Colonic mucosa (tissue), 4 donors: ENCODE measurements at regions of chr13 and their contacts with region 1.

Region 1: DNA sequence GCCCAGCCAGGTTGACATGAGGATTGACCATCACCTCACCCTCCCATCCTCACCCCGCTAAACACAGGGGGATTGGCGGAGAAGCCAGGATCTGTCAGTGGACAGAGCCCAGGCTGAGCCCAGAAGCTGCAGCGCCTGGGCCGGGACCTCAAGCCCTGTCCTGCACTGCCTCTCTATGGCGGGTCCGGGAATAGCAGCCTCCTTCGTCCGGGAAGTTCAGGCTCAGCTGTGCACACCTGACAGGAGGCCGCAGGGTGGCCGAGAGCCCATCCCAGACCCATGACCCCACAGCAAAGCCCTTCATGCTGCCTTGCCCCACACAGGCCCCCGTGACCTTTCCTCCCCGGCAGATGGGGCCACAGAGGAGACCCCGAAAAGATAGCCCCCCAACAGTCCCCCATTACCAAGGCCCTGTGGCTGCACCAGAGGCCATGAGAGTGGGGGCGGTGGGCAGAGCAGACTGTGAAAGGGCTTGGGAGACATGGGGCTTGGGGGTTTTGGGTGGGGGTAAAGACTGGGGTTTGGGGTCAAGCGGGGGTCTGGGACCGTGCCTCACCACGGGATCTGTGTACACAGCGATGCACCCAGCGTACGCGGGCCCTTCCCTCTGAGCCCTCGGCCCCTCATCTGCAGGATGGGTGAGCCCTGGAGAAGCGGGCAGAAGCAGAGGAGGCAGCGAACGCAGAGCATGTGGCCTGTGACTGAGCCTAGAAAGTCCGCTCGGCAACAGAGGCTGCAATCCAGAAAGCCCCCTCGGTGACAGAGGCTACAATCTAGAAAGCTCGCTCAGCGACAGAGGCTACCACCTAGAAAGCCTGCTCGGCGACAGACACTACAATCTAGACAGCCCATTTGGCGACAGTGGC is 68.1 kb downstream of the SPACA7 start:
- DNase-seq: peak; percentile 68
- H3K4me3 ChIP-seq: no peak overlapping the region
- H3K27ac ChIP-seq: no peak overlapping the region
- H3K4me1 ChIP-seq: no peaks in the 10 kb centered on the region
- H3K27me3 ChIP-seq: peaks cover 7% of the 10 kb centered on the region
- CTCF ChIP-seq: peak; percentile 83

Region 2: GRCh38 chr13:111474136-111475002 is 969.9 kb before region 1 on chr13:
- intact Hi-C with region 1: loop called (anchors 5 kb)
- DNase-seq: no peak
- H3K4me3 ChIP-seq: no peak overlapping the region
- H3K27ac ChIP-seq: no peak overlapping the region
- H3K4me1 ChIP-seq: no peaks in the 10 kb centered on the region
- H3K27me3 ChIP-seq: no peaks in the 10 kb centered on the region
- CTCF ChIP-seq: peak; percentile 20

Region 3: DNA sequence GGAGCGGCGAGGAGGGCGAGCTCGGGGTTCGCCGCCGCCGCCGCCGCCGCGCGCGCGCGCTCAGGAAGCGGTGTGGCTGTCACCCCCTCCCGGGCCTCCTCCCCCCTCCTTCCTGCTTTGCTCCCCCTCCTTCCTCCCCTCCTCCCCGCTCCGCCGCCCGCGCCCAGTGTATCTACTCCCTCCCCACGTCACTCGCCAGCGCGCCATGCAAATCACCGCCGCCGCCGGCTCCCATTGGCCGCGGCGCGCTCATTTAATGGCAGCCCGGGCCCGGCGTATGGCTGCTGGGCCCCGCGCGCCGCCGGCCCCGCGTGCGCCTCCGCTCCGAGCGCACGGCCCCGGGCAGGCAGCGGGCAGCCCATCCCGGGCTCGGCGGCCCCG is 377.6 kb before region 1 on chr13:
- intact Hi-C with region 1: loop called (anchors 10 kb)
- DNase-seq: peak; percentile 60
- H3K4me3 ChIP-seq: peak overlapping the region; percentile 13
- H3K27ac ChIP-seq: no peak overlapping the region
- H3K4me1 ChIP-seq: no peaks in the 10 kb centered on the region
- H3K27me3 ChIP-seq: peaks cover 83% of the 10 kb centered on the region
- CTCF ChIP-seq: no peak

Region 4: DNA sequence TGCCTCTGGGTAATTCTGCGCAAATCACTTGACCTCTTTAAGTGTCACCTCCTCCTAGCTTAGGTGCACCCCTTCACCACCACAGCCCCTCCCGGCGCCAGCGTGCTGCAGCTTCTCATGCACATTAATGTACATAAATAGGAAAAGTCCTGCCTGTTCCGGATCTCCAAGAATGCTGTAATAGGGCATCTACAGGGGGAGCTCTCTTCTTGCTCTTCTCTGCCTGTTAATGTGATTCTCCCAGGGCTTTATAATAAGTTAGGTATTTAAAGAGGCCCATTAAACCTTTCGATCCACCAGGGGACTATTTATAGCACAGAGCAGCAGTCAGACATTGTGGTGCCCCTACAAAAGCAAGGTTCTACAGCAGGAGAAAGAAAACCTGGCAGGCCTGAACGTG is 342.0 kb before region 1 on chr13:
- intact Hi-C with region 1: loop called (anchors 2 kb)
- DNase-seq: no peak
- H3K4me3 ChIP-seq: no peak overlapping the region
- H3K27ac ChIP-seq: no peak overlapping the region
- H3K4me1 ChIP-seq: no peaks in the 10 kb centered on the region
- H3K27me3 ChIP-seq: peaks cover 53% of the 10 kb centered on the region
- CTCF ChIP-seq: peak; percentile 15

Region 5: GRCh38 chr13:112587212-112587763 is 143.1 kb after region 1 on chr13:
- intact Hi-C with region 1: no loop called
- DNase-seq: peak; percentile 87
- H3K4me3 ChIP-seq: peak overlapping the region; percentile 100
- H3K27ac ChIP-seq: peak overlapping the region; percentile 99
- H3K4me1 ChIP-seq: no peaks in the 10 kb centered on the region
- H3K27me3 ChIP-seq: no peaks in the 10 kb centered on the region
- CTCF ChIP-seq: no peak